Heart right ventricle (tissue), 16 donors: ENCODE measurements at regions of chr21 and their contacts with region 1.

Region 1: DNA sequence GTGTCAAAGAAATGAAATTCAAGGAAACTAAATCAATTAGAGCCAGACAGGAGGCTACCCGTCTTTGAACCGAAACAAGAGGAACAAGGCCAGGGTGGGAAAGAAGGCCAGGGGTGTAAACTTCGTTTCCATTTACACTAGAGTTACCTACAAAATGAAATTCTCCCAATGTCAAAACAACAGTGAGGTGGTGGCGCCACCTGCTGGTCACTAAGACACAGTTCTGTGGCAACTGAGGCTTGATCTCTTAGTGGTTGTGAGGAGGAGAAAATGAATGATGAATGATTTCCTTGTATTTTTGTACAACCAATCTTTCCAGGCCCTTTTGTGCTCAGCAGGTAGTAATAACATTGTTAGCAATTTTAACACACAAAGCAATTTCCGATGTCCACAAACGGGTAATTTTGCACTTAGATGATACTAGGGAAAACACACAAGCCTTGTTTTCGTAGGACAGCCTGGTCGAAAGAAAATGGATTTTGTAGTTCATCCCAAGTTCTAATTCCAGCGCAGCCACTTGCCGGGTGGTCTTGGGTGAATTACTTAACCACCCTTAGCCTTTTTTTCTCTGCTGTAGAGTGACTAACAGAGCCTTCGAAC is 54.8 kb upstream of the SOD1 start:
- DNase-seq: peak; percentile 39 to 66
- ATAC-seq: peak in 6 of 8 donors; percentile 46 to 76 (median 56)
- H3K4me3 ChIP-seq: no peak overlapping the region
- H3K27ac ChIP-seq: no peak overlapping the region
- H3K4me1 ChIP-seq: no peaks in the 10 kb centered on the region
- H3K27me3 ChIP-seq: peaks cover 0 to 11% (median 0%) of the 10 kb centered on the region in 7 donors
- CTCF ChIP-seq: peak; percentile 76 to 96 (median 90)

Region 2: DNA sequence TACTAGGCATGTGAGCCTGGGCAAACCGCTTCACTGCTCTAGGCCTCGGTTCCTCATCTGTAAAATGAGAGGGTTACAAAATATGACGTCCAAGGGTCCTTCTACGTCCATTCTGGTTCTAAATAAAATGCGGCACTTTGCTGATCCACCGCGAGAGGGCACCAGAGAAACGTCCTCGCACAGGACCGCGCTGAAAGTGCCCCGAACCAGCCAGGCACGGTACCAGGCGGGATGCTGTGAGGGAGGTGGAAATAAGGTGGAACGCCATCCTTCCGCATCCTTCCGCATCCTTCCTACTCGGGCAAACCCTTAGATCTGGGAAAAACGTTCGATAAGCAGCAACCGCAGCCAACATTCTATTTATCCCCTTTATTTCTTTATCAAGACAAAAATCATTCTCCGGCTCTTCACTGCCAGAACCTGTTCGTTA is 506.1 kb before region 1 on chr21:
- intact Hi-C with region 1: loop called (anchors 1 to 10 kb)
- DNase-seq: peak; percentile 58 to 66
- ATAC-seq: peak in 7 of 8 donors; percentile 11 to 82 (median 69)
- H3K4me3 ChIP-seq: no peak overlapping the region
- H3K27ac ChIP-seq: no peak overlapping the region
- H3K4me1 ChIP-seq: peaks cover 0 to 7% (median 0%) of the 10 kb centered on the region in 9 donors
- H3K27me3 ChIP-seq: peaks cover 0 to 13% (median 9%) of the 10 kb centered on the region in 7 donors
- CTCF ChIP-seq: peak; percentile 79 to 89 (median 85)

Region 3: GRCh38 chr21:31198575-31198974 is 406.1 kb before region 1 on chr21:
- intact Hi-C with region 1: loop called (anchors 1 to 10 kb)
- DNase-seq: no peak
- ATAC-seq: peak in 4 of 8 donors; percentile 45 to 56 (median 46)
- H3K4me3 ChIP-seq: no peak overlapping the region
- H3K27ac ChIP-seq: no peak overlapping the region
- H3K4me1 ChIP-seq: peaks cover 0 to 27% (median 0%) of the 10 kb centered on the region in 9 donors
- H3K27me3 ChIP-seq: peaks cover 0 to 16% (median 0%) of the 10 kb centered on the region in 7 donors
- CTCF ChIP-seq: peak; percentile 33 to 78 (median 69)

Region 4: DNA sequence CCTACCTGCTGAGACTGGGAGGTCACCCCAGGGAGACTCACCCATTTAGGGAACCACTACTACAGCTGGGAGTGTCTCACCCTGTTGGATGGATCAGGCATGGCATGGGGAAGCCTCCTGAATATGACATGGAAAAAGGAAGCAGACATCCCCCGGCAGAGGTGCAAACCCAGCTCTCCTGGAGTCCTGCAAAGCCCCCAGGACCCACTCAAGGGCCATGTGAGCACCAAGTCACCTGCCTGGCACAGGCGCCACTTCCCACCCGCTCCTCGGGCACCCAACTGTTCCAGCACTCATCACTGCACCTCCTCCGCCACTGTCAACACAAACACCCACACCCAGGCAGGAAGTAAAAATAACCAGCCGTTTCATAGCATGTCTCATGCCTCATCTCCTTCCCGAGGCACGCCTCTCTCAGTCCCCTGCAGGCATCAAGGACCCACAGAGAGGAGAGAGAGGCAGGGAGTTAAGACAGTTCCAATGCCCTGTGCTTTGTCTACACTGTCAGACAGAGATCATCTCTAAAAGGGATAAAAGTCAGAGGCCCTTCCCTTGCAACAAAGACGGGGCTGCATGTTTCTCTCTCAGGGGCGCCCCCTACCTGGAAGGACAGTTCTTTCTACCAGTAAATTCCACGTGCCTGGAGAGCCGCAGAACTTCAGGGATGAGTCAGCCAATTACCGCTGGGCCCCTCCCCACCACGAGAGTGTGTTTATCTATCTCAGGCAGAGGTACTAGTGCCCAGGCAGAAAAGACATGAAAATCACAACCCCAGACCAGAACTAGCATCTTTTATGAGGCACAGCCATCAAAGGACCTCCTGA is 95.3 kb before region 1 on chr21:
- intact Hi-C with region 1: no loop called
- DNase-seq: no peak
- ATAC-seq: no peak
- H3K4me3 ChIP-seq: no peak overlapping the region
- H3K27ac ChIP-seq: no peak overlapping the region
- H3K4me1 ChIP-seq: no peaks in the 10 kb centered on the region
- H3K27me3 ChIP-seq: peaks cover 0 to 15% (median 0%) of the 10 kb centered on the region in 7 donors
- CTCF ChIP-seq: no peak

Region 5: DNA sequence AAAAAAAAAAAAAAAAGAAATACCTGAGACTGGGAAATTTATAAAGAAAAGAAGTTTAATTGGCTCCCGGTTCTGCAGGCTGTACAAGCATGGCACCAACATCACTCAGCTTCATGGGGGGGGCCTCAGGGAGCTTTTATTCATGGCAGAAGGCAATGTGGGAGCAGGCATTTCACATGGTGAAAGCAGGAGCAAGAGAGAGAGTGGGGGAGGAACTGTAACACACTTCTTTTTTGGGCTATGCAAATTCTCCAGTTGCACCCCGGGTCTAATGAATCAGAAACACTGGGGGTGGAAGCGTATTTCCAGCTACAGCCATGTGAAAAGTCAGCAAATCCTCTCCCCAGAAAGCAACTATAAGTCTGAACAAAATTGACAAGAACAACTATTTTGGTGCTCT is 43.0 kb after region 1 on chr21:
- intact Hi-C with region 1: no loop called
- DNase-seq: no peak
- ATAC-seq: no peak
- H3K4me3 ChIP-seq: no peak overlapping the region
- H3K27ac ChIP-seq: no peak overlapping the region
- H3K4me1 ChIP-seq: no peaks in the 10 kb centered on the region
- H3K27me3 ChIP-seq: no peaks in the 10 kb centered on the region
- CTCF ChIP-seq: no peak

Region 6: DNA sequence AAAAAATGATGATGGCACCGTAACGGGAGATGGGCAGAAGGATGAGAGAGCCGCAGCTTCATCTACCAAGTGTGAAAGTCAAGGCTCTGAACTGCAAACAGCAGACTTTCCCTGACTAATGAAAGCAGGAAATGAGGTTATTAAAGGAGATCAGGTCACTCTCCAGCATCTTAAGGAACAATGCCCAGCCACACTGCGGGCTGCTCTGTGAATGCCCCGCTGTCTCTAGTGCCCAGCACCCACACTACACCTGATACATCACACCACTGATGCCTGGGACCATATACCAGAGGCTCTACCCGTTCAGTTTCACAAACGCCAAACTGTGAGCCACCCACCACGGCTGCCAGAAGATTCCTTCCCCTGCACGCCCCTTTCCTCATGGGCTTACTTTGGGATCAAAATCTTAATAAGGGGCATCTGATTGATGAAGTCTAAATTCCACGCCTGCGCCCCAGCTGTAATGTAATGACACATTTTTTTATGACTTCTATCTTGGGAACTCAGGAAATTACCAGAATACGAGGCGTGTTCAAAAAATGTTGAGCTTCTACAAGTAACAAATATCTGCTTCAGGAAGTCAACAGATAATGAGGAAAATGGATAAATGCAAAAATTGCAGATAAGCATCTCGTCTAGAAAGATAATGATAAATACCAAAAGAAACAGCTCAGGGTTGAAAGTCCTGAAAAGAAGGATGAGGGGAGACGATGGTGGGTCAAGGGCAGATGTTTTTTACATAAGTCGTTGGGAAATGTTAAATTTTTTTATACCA is 602.1 kb after region 1 on chr21:
- intact Hi-C with region 1: no loop called
- DNase-seq: no peak
- ATAC-seq: no peak
- H3K4me3 ChIP-seq: no peak overlapping the region
- H3K27ac ChIP-seq: no peak overlapping the region
- H3K4me1 ChIP-seq: no peaks in the 10 kb centered on the region
- H3K27me3 ChIP-seq: no peaks in the 10 kb centered on the region
- CTCF ChIP-seq: no peak